Gastrocnemius medialis (tissue), 4 donors: ENCODE measurements at regions of chr21 and their contacts with region 1.

Region 1: DNA sequence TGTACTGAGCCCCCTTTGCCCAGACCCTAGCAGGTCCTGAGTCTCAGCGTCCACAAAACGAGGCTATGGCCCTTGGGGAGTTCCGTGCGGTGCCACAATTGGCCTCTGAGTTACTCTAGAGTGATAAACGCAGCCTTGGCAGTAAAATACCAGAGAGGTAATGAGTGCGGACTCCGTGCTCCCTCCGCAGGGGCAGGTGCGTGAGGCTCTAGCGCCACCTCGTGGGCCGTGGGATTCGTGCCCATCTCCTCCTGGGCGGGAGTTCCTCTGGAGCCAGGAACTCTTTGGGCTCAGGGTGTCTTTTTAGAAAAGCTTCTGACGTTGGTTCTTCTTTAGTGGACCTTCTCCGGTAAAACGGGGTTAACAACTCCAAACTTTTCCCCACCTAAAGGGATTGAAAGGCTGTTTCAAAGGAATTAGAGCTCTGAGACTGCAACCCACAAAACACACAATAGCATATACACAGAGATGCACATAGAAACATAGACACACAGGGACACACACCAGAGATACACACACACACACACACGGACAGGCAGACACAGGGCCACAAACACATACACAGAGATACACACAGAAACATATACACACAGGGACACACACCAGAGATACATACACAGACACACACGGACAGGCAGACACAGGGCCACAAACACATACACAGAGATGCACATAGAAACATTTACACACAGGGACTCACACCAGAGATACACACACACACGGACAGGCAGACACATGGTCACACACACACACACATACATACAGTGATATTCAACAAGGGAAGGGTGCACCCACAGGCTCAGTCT is 99.4 kb downstream of the KCNJ15 start:
- DNase-seq: peak; percentile 22 to 29
- ATAC-seq: peak; percentile 34 to 55
- H3K4me3 ChIP-seq: no peak overlapping the region
- H3K27ac ChIP-seq: no peak overlapping the region
- H3K4me1 ChIP-seq: no peaks in the 10 kb centered on the region
- H3K27me3 ChIP-seq: peaks cover 0 to 6% (median 0%) of the 10 kb centered on the region in 3 donors
- CTCF ChIP-seq: peak; percentile 62 to 88 (median 80)
- POLR2A ChIP-seq: no peak

Region 2: GRCh38 chr21:37675202-37675801 is 680.9 kb before region 1 on chr21:
- in situ Hi-C with region 1: loop called in 1 of 4 experiments (anchors 25 kb)
- intact Hi-C with region 1: loop called (anchors 2 kb)
- DNase-seq: peak in 1 of 2 donors; percentile 30
- ATAC-seq: peak; percentile 42 to 62
- H3K4me3 ChIP-seq: peak overlapping the region in 2 of 4 donors; percentile 16 to 25
- H3K27ac ChIP-seq: no peak overlapping the region
- H3K4me1 ChIP-seq: peaks cover 3 to 4% of the 10 kb centered on the region in 2 donors
- H3K27me3 ChIP-seq: peaks cover 0 to 3% (median 0%) of the 10 kb centered on the region in 3 donors
- CTCF ChIP-seq: peak; percentile 60 to 97 (median 81)
- POLR2A ChIP-seq: no peak

Region 3: GRCh38 chr21:37711836-37712568 is 644.2 kb before region 1 on chr21:
- in situ Hi-C with region 1: loop called in 3 of 4 experiments (anchors 10 to 25 kb)
- intact Hi-C with region 1: no loop called
- DNase-seq: peak in 1 of 2 donors; percentile 21
- ATAC-seq: peak in 1 of 2 donors; percentile 80
- H3K4me3 ChIP-seq: no peak overlapping the region
- H3K27ac ChIP-seq: no peak overlapping the region
- H3K4me1 ChIP-seq: peaks cover 8 to 12% of the 10 kb centered on the region in 2 donors
- H3K27me3 ChIP-seq: no peaks in the 10 kb centered on the region
- CTCF ChIP-seq: peak; percentile 22 to 73 (median 44)
- POLR2A ChIP-seq: no peak

Region 4: DNA sequence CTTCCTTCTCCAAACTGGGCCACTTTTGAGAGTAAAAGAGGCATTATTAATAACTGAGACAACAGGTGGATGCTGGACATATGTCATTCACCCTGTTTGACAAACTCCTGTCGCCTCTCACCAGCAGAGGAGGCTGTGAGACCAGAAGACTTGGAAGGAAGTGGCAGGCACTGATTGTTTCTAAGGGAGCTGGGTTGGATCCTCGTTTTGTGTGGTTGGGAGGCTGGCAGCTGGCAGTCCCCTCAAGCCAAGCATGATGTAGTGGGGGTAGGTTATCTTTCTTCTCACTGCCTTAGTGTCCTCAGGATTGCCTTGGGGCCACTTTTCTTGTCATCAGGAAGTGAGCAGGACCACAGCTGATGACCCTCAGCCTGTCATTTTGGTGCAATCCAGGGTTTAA is 185.9 kb before region 1 on chr21:
- in situ Hi-C with region 1: no loop called
- intact Hi-C with region 1: loop called (anchors 5 kb)
- DNase-seq: no peak
- ATAC-seq: no peak
- H3K4me3 ChIP-seq: no peak overlapping the region
- H3K27ac ChIP-seq: no peak overlapping the region
- H3K4me1 ChIP-seq: no peaks in the 10 kb centered on the region
- H3K27me3 ChIP-seq: no peaks in the 10 kb centered on the region
- CTCF ChIP-seq: peak in 1 of 5 experiments; percentile 27
- POLR2A ChIP-seq: no peak

Region 5: GRCh38 chr21:38219049-38219628 is 137.1 kb before region 1 on chr21:
- in situ Hi-C with region 1: loop called (anchors 5 to 10 kb)
- intact Hi-C with region 1: loop called (anchors 1 kb)
- DNase-seq: peak; percentile 17 to 33
- ATAC-seq: peak in 1 of 2 donors; percentile 66
- H3K4me3 ChIP-seq: no peak overlapping the region
- H3K27ac ChIP-seq: no peak overlapping the region
- H3K4me1 ChIP-seq: no peaks in the 10 kb centered on the region
- H3K27me3 ChIP-seq: no peaks in the 10 kb centered on the region
- CTCF ChIP-seq: peak; percentile 68 to 89 (median 75)
- POLR2A ChIP-seq: no peak

Region 6: GRCh38 chr21:38282921-38283320 is 73.3 kb before region 1 on chr21:
- in situ Hi-C with region 1: no loop called
- intact Hi-C with region 1: no loop called
- DNase-seq: no peak
- ATAC-seq: no peak
- H3K4me3 ChIP-seq: no peak overlapping the region
- H3K27ac ChIP-seq: no peak overlapping the region
- H3K4me1 ChIP-seq: no peaks in the 10 kb centered on the region
- H3K27me3 ChIP-seq: no peaks in the 10 kb centered on the region
- CTCF ChIP-seq: no peak
- POLR2A ChIP-seq: no peak